AG04449 (cell line): ENCODE measurements at regions of chr19 and their contacts with region 1.

Region 1: GRCh38 chr19:48993175-48994034 is at the starts of genes GYS1 and RUVBL2:
- DNase-seq: peak; percentile 99
- H3K4me3 ChIP-seq: peak within 1 kb of the TSS; percentile 97
- CTCF ChIP-seq: peak; percentile 99

Region 2: GRCh38 chr19:48795055-48795684 is 198.2 kb before region 1 on chr19:
- CTCF ChIA-PET with region 1: interaction called, 10 read pairs
- POLR2A ChIA-PET with region 1: no interaction called
- DNase-seq: peak; percentile 65
- H3K4me3 ChIP-seq: peak overlapping the region; percentile 70
- CTCF ChIP-seq: peak; percentile 93

Region 3: GRCh38 chr19:48975947-48976847 is 17.2 kb before region 1 on chr19:
- CTCF ChIA-PET with region 1: interaction called, 128 read pairs
- POLR2A ChIA-PET with region 1: interaction called, 4 read pairs
- DNase-seq: no peak
- H3K4me3 ChIP-seq: no peak overlapping the region
- CTCF ChIP-seq: no peak

Region 4: DNA sequence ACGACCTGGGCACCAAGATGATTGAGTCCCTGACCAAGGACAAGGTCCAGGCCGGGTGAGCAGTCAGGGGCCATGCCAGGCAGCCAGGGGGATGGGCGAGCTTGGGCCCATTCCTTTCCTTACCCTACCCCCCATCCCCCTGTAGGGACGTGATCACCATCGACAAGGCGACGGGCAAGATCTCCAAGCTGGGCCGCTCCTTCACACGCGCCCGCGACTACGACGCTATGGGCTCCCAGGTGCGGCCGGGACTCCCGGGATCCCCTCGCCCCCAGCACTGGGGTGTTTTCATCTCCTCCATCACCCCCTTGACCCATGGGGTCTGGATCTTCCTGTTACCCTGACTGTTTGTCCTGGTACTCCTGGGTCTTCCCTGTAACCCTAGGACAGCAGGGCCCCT is 16.4 kb after region 1 on chr19:
- CTCF ChIA-PET with region 1: interaction called, 146 read pairs
- POLR2A ChIA-PET with region 1: interaction called, 3 read pairs
- DNase-seq: no peak
- H3K4me3 ChIP-seq: no peak overlapping the region
- CTCF ChIP-seq: no peak

Region 5: DNA sequence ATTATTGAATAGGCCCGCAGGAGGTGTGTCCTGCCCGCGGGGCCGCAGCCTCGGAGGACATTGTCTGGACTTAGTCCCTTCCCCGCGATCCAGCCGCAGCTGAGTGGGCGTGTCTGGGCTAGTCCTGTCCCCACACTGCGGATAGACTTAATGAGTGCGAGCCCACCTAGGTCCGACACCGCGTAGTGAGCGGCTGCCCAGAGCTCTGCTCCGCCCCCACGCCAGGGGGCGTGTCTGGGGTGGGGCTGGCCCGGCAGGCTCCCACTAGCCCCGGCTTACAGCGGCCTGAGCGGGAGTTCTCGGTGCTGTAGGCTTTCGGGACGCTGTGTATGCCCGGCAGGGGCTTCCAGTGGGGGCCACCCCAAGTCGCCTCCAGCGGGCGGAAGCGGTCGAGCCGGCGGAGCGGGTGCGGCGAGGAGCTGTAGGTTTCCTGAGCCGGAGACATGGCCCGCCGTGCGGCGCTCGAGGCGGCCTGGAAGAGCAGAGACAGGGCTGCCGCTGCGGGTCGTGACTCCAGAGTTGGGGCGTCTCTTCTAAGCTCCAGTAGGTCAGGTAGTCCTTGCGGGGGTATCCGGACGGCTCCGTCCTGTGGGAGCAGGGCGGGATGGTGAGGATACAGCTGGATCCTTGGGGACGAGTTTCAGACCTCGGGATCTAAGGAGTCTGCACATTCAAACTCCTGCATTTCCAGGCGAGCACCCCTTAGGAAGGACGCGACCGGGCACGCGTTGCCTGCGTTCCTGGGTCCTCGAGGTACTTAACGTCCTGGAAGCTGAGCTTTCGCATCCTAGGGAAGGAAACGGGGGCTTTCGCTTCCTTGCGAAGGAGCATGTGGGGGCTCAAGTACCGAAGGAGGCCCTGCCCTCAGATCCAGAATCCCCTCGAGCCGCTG is 62.9 kb after region 1 on chr19:
- CTCF ChIA-PET with region 1: interaction called, 46 read pairs
- POLR2A ChIA-PET with region 1: interaction called, 6 read pairs
- DNase-seq: no peak
- H3K4me3 ChIP-seq: peak overlapping the region; percentile 66
- CTCF ChIP-seq: peak; percentile 46